Gastrocnemius medialis (tissue), 4 donors: ENCODE measurements at regions of chr4 and their contacts with region 1.

Region 1: GRCh38 chr4:124018383-124019317 is 622.1 kb downstream of the SPRY1 start:
- DNase-seq: peak; percentile 43 to 61
- ATAC-seq: peak; percentile 73 to 84
- H3K4me3 ChIP-seq: peak overlapping the region in 1 of 4 donors; percentile 2
- H3K27ac ChIP-seq: peak overlapping the region; percentile 66 to 77 (median 75)
- H3K4me1 ChIP-seq: peaks cover 24% of the 10 kb centered on the region in 2 donors
- H3K27me3 ChIP-seq: no peaks in the 10 kb centered on the region
- CTCF ChIP-seq: no peak
- POLR2A ChIP-seq: no peak

Region 2: GRCh38 chr4:123676890-123677229 is 341.8 kb before region 1 on chr4:
- in situ Hi-C with region 1: no loop called
- intact Hi-C with region 1: loop called (anchors 5 kb)
- DNase-seq: peak; percentile 53 to 70
- ATAC-seq: peak; percentile 95
- H3K4me3 ChIP-seq: peak overlapping the region in 2 of 4 donors; percentile 20 to 26
- H3K27ac ChIP-seq: peak overlapping the region; percentile 48 to 75 (median 67)
- H3K4me1 ChIP-seq: peaks cover 15 to 21% of the 10 kb centered on the region in 2 donors
- H3K27me3 ChIP-seq: no peaks in the 10 kb centered on the region
- CTCF ChIP-seq: no peak
- POLR2A ChIP-seq: no peak

Region 3: DNA sequence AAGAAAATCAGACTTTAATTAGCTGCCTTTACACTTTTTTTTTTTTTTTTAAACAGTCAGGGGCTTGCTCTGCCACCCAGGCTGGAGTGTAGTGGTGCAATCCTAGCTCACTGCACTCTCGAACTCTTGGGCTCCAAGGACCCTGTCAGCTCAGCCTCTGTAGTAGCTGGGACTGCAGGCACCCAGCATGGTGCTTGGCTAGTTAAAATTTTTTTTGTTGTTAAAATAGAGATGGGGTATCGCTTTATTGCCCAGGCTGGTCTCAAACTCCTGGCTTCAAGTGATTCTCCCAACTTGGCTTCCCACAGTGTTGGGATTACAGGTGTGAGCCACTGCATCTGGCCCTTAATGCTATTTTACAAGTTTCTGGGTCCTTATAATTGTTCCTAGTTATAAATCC is 263.0 kb before region 1 on chr4:
- in situ Hi-C with region 1: no loop called
- intact Hi-C with region 1: no loop called
- DNase-seq: no peak
- ATAC-seq: no peak
- H3K4me3 ChIP-seq: no peak overlapping the region
- H3K27ac ChIP-seq: no peak overlapping the region
- H3K4me1 ChIP-seq: no peaks in the 10 kb centered on the region
- H3K27me3 ChIP-seq: no peaks in the 10 kb centered on the region
- CTCF ChIP-seq: no peak
- POLR2A ChIP-seq: no peak

Region 4: GRCh38 chr4:123893011-123893981 is 125.4 kb before region 1 on chr4:
- in situ Hi-C with region 1: no loop called
- intact Hi-C with region 1: loop called (anchors 5 kb)
- DNase-seq: peak in 1 of 2 donors; percentile 16
- ATAC-seq: peak; percentile 31 to 61
- H3K4me3 ChIP-seq: peak overlapping the region in 1 of 4 donors; percentile 7
- H3K27ac ChIP-seq: peak overlapping the region; percentile 55 to 73 (median 63)
- H3K4me1 ChIP-seq: peaks cover 49 to 56% of the 10 kb centered on the region in 2 donors
- H3K27me3 ChIP-seq: no peaks in the 10 kb centered on the region
- CTCF ChIP-seq: no peak
- POLR2A ChIP-seq: no peak

Region 5: GRCh38 chr4:124105212-124105611 is 86.6 kb after region 1 on chr4:
- in situ Hi-C with region 1: no loop called
- intact Hi-C with region 1: loop called (anchors 10 kb)
- DNase-seq: no peak
- ATAC-seq: no peak
- H3K4me3 ChIP-seq: no peak overlapping the region
- H3K27ac ChIP-seq: no peak overlapping the region
- H3K4me1 ChIP-seq: no peaks in the 10 kb centered on the region
- H3K27me3 ChIP-seq: no peaks in the 10 kb centered on the region
- CTCF ChIP-seq: no peak
- POLR2A ChIP-seq: no peak

Region 6: GRCh38 chr4:124322234-124323065 is 303.8 kb after region 1 on chr4:
- in situ Hi-C with region 1: no loop called
- intact Hi-C with region 1: no loop called
- DNase-seq: no peak
- ATAC-seq: no peak
- H3K4me3 ChIP-seq: no peak overlapping the region
- H3K27ac ChIP-seq: no peak overlapping the region
- H3K4me1 ChIP-seq: peaks cover 0 to 6% of the 10 kb centered on the region in 2 donors
- H3K27me3 ChIP-seq: no peaks in the 10 kb centered on the region
- CTCF ChIP-seq: peak; percentile 14 to 58 (median 35)
- POLR2A ChIP-seq: no peak